GM10248 (cell line): ENCODE measurements at regions of chr7 and their contacts with region 1.

Region 1: DNA sequence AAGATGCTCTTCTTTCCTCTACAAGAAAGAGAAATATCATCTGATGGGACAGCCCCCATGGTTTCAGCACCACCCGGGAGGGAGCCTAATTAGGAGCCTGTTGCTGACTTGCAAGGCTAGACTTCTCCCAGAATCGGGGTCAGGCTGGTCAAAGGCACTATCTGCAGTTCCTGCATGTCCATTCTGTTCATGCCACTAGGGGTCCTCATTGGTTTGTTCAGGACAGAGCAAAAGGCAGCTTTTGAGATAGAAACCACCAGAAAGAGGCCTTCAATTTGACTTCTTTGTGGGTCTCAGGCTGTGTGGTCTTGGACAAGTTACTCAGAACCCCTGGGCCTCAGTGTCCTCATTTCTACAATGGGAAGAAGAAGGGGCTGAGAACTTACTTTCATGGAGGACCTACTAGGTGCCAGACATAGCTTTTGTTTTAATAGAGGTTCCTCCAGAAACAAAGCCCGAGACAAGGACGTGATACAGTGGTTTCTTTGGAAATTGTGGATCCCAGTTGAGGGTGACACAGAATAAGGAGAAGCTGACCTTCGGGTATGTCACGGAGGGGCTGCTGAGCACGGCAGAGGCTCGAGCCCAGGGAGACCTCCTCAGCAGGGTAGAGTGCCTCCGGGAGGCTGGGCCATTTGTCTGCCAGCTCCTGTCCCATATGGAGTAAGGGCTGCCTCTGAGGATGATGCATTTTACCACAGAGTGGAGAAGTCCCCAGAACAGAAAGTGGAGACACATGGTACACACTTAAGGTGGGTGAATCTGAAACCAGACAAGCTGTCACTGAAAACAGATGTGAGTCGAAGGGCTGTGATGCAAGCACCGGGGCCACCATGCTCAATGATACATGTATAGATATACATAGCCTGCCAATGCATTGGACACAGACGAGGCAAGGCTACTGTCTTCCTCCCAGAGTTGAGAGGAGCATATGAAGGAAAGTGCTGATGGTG is 33.1 kb upstream of the NEUROD6 start:
- DNase-seq: peak; percentile 68
- CTCF ChIP-seq: peak; percentile 62

Region 2: DNA sequence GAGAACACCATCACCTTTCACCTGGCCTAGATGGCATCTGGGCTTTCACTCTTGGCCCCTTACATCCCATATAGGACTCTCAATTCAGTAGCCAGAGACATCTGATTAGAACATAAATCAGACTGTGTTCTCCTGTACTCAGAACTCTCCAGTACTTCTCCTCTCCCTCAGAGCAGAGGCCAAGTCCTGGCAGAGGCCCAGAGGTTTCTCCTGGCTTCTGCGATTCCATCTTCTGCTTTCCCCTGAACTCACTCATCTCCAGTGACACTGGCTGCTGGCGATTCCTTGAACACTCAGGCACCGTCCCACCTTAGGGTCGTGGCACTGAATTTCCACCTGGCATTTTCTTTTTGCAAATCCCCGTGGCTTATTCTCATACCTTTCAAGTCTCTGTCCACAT is 28.2 kb before region 1 on chr7:
- CTCF ChIA-PET with region 1: interaction called, 11 read pairs
- POLR2A ChIA-PET with region 1: no interaction called
- DNase-seq: no peak
- CTCF ChIP-seq: no peak

Region 3: DNA sequence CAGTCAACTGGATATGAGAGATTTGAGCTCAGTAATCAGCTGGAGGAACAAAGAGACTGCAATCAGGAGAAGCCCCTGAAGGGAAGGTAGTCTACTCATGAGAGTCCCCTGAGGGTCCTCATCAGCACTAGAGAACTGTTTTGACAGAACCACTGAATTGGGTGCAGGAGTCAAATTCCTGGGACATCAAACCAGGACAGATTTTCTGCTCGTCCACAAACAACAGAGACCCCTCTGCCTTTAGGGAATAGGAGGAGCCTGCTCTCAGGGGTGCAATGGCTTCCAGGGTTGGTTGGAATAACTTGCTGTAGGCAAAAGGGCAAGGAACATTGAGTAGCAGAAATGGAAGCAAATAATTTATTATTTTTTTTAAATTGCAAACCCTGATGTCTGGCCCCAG is 11.2 kb before region 1 on chr7:
- CTCF ChIA-PET with region 1: interaction called, 15 read pairs
- POLR2A ChIA-PET with region 1: no interaction called
- DNase-seq: no peak
- CTCF ChIP-seq: no peak